Mucosa of descending colon (tissue), 3 donors: ENCODE measurements at regions of chr5 and their contacts with region 1.

Region 1: DNA sequence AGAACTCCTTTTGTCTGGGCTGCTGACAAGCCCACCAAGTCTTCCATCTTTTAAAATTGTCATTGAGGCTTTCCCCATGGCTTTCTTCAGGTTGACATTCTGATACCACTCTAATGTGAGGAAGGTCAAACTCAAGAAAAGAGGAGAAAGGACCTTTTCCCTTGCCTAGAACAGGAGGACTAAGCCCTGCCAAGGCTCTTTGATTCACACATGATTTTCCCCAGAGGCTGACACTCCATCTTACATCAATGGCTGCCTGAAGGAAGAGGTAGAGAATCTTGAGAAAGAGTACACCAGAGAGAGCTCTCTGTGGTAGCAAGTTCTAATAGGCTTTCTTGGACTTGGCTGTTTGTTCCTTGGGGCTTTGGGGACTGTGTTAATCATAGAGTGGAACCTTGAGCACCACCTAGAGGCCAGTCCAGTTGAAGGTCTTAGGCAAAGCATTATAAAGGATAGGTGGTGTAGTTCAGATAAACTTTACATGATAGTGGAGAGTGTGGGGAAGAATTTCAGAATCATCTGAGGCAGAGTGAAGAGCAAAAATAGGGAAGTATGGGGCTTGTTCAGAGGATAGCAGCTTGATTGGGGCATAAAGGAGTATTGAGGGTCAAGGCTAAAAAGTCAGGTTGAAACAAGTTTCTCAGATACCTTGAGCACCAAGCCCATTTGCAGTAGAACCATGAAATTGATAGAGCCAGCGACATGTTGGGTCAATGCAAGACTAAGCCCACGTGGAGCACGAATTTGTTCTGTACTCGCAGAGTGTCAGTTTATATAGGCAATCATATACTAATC is 36.7 kb downstream of the NDFIP1 start:
- DNase-seq: peak in 1 of 3 donors; percentile 90
- ATAC-seq: peak; percentile 88
- H3K4me3 ChIP-seq: no peak overlapping the region
- H3K4me1 ChIP-seq: no peaks in the 10 kb centered on the region
- CTCF ChIP-seq: no peak

Region 2: DNA sequence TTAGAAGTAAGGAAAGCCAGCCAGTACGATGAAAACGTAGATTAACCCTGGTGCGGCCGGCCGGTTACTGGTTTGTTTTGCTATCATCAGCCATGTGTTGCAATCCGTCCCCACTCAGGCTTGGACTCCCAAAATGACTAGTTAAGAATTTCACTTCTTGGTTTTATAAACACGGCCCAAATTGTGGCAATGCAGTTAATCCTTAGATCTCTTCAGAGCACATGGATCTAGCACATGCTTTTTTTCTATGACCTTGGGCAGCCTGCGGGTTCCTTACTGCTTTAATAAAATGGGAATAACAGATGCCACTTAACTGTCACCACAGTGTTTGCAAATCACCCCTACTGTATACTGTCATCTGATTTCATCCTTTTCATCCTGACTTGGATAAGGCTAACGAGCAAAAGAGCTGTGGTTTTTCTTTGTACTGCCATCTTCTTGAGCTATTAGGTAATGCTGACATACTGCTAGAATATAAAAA is 35.2 kb before region 1 on chr5:
- intact Hi-C with region 1: loop called in 1 of 2 experiments (anchors 2 kb)
- DNase-seq: peak in 1 of 3 donors; percentile 39
- ATAC-seq: no peak
- H3K4me3 ChIP-seq: peak overlapping the region; percentile 69
- H3K4me1 ChIP-seq: peaks cover 24% of the 10 kb centered on the region
- CTCF ChIP-seq: no peak